ENCODE measurements at regions of chr1 and their contacts with region 1.

Region 1: GRCh38 chr1:38020396-38020795 is 7.9 kb downstream of the UTP11 start:
- DNase-seq: no peak
- H3K4me3 ChIP-seq: no peak overlapping the region
- H3K27ac ChIP-seq: no peak overlapping the region
- H3K4me1 ChIP-seq: peaks cover 12 to 22% of the 10 kb centered on the region in 2 donors
- H3K27me3 ChIP-seq: no peaks in the 10 kb centered on the region
- CTCF ChIP-seq: no peak
- POLR2A ChIP-seq: no peak

Region 2: GRCh38 chr1:37989361-37989930 is 30.9 kb before region 1 on chr1:
- intact Hi-C with region 1: loop called in 1 of 2 experiments (anchors 5 kb)
- DNase-seq: peak in 6 of 7 donors; percentile 51 to 73 (median 58)
- H3K4me3 ChIP-seq: peak overlapping the region; percentile 42 to 88 (median 59)
- H3K27ac ChIP-seq: peak overlapping the region; percentile 36 to 80 (median 54)
- H3K4me1 ChIP-seq: peaks cover 9 to 15% of the 10 kb centered on the region in 2 donors
- H3K27me3 ChIP-seq: no peaks in the 10 kb centered on the region
- CTCF ChIP-seq: no peak
- POLR2A ChIP-seq: no peak

Region 3: GRCh38 chr1:38173157-38173831 is 152.9 kb after region 1 on chr1:
- intact Hi-C with region 1: no loop called
- DNase-seq: no peak
- H3K4me3 ChIP-seq: no peak overlapping the region
- H3K27ac ChIP-seq: no peak overlapping the region
- H3K4me1 ChIP-seq: no peaks in the 10 kb centered on the region
- H3K27me3 ChIP-seq: no peaks in the 10 kb centered on the region
- CTCF ChIP-seq: no peak
- POLR2A ChIP-seq: no peak